OCI-LY7 (cell line): ENCODE measurements at regions of chr22 and their contacts with region 1.

Region 1: DNA sequence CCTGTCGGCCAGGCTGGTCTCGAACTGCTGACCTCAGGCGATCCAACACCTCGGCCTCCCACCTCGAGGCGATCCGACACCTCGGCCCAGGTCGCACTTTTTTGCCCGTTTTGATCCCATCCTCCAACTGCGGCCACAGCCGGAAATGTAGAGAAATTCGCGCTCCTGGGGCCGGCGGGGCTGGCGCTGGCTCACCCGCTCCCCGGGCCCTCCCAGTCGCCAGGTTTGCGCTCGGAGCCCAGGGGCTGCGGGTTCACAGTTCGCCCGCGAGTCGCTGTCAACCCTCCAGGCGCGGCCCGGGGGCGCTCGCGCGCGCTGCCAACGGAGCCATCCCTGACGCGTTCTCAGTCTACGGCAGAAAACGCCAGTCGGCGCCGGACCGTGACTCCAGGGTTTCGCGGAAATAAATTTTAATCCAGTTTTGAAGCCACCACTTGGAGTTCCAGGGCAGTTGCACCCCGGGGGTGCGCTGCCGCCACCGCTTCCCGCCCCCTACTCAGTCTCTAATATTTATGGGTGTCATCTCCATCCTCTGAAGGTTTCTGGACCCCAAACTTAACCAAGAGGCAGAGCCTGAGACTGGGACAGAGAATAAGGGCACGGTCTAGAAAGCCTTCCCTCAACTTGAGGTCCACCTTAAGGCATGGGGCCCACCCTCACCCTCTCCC is 1.5 kb upstream of the KLHDC7B start:
- DNase-seq: peak; percentile 66
- H3K4me3 ChIP-seq: no peak overlapping the region
- H3K27ac ChIP-seq: no peak overlapping the region
- H3K4me1 ChIP-seq: peaks cover 57% of the 10 kb centered on the region
- CTCF ChIP-seq: peak; percentile 80

Region 2: DNA sequence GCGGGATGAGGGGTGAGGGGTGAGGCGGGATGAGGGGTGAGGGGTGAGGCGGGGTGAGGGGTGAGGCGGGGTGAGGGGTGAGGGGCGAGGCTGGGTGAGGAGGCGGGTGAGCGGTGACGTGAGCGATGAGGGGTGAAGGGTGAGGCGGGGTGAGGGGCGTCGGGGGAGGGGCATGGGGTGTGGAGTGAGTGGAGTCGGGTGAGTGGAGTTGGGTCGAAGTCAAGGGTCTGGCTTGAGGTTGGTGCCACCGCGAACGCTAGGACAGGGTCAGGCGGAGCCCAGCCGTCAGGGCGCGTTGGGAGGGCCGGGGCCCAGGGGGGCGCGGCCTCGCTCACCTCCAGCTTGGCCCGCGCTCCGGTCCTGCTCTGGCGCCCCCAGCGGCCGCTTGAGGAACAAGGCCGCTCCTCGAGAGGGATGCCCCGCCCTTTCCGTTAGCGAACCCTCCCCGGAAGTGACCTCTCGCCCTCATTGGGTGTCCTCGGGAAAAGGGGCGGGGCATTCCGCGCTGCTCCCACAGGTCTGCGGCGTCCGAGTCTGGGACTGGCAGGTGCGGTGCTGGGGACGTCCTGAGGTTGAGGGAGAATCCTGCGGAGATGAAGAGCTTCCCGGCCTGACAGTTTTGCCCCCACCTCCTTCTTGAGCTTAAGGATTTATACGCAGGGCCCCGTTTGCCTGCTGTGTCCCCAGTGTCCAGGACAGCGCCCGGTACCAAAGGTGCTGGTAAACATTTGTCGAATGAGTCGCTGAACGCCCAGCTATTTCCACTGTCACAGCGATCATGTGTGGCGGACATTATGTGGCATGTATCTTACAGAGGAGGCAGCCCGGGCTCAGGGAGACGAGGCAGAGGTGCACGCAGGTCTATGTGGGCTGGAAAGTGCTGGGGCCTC is 18.6 kb after region 1 on chr22 and contains the start of gene SYCE3:
- CTCF ChIA-PET with region 1: interaction called, 5 read pairs
- POLR2A ChIA-PET with region 1: interaction called, 10 read pairs
- intact Hi-C with region 1: no loop called
- DNase-seq: peak; percentile 98
- H3K4me3 ChIP-seq: peak within 1 kb of the TSS; percentile 66
- H3K27ac ChIP-seq: no peak within 1 kb of the TSS
- H3K4me1 ChIP-seq: peaks cover 5% of the 10 kb centered on the region
- CTCF ChIP-seq: peak; percentile 81
- total RNA-seq, gene SYCE3: not detected in 2 replicates

Region 3: GRCh38 chr22:50620593-50621355 is 76.6 kb after region 1 on chr22:
- CTCF ChIA-PET with region 1: interaction called, 3 read pairs
- POLR2A ChIA-PET with region 1: interaction called, 9 read pairs
- intact Hi-C with region 1: loop called (anchors 2 kb)
- DNase-seq: peak; percentile 92
- H3K4me3 ChIP-seq: peak overlapping the region; percentile 67
- H3K27ac ChIP-seq: peak overlapping the region; percentile 82
- H3K4me1 ChIP-seq: peaks cover 37% of the 10 kb centered on the region
- CTCF ChIP-seq: no peak; the same call in 1 of the 2 replicates

Region 4: GRCh38 chr22:50691521-50691920 is 147.3 kb after region 1 on chr22:
- CTCF ChIA-PET with region 1: no interaction called
- POLR2A ChIA-PET with region 1: no interaction called
- intact Hi-C with region 1: loop called (anchors 1 kb)
- DNase-seq: peak; percentile 57
- H3K4me3 ChIP-seq: no peak overlapping the region
- H3K27ac ChIP-seq: no peak overlapping the region
- H3K4me1 ChIP-seq: peaks cover 7% of the 10 kb centered on the region
- CTCF ChIP-seq: peak; percentile 95